GM18951 (cell line): ENCODE measurements at regions of chr11 and their contacts with region 1.

Region 1: DNA sequence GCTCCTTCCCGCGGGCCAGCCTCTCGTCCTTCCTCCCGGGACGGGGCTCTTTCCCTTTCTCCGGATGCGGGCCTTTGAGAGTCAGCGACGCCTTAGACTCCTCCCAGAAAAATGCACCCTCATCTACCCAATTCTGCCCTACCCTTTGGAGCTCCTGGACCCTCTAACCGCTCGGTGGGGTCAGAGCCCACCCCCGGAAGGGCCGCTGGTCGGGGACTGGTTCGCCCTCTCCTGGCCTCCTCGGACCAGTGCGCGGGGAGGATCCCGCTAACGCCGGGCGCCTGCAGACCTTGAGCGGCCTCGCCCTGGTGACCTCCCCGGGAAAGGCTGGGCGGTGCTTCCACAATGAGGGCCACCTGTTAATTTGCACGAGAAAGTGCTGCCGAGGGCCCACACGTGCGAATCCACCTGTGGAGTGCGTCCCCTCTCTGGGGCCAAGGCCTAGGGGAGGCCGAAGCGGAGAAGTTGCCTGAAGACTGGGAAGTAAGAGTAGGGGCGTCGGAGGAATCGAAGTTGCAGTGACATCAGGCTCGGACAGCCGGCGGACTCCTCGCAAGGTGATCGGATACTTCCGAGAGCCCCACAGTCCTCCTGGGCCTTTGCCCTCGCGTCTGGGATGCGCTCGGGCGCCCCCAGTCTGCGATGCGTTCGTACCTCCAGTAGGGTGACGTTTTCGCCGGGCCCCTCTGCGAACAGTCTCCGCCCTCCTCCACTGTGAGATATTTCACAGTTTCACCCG is 61.5 kb downstream of the ENDOD1 start:
- POLR2A ChIP-seq: peak; percentile 68

Region 2: DNA sequence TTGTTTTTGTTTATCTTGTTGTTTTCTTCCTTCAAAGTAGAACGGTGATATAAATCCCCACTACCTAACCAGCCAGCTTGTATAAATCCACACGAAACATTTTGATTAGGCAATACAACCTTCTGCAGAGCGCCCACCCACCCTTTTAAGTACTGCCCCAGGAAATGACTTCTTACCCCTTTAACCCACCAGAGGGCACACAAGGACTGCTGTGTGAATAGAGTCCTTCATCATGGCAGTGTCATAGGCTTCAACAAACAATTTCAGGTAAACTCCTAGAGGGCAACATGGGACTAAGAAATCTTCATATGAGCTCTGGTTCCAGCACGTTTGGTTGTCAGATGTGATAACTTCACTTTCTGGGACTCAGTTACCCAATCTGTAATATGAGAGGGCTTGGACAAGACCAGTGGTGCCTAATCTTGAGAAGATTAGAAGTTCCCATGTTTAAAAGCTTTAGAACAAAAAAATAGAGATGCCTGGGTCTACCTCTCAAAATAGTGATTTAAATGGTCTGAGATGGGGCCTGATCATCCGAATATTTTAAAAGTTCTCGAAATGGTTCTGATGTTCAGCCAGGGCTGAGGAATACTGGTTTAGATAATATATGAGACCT is 527.9 kb before region 1 on chr11:
- in situ Hi-C with region 1: loop called (anchors 10 kb)
- POLR2A ChIP-seq: no peak

Region 3: GRCh38 chr11:95067039-95067840 is 83.9 kb before region 1 on chr11:
- in situ Hi-C with region 1: loop called (anchors 10 kb)
- POLR2A ChIP-seq: peak; percentile 72

Region 4: GRCh38 chr11:95764267-95764898 is 613.3 kb after region 1 on chr11:
- in situ Hi-C with region 1: loop called (anchors 5 kb)
- POLR2A ChIP-seq: no peak

Region 5: GRCh38 chr11:96424693-96425092 is 1273.6 kb after region 1 on chr11:
- in situ Hi-C with region 1: loop called (anchors 25 kb)
- POLR2A ChIP-seq: no peak